ENCODE measurements at regions of chr12 and their contacts with region 1.

Region 1: DNA sequence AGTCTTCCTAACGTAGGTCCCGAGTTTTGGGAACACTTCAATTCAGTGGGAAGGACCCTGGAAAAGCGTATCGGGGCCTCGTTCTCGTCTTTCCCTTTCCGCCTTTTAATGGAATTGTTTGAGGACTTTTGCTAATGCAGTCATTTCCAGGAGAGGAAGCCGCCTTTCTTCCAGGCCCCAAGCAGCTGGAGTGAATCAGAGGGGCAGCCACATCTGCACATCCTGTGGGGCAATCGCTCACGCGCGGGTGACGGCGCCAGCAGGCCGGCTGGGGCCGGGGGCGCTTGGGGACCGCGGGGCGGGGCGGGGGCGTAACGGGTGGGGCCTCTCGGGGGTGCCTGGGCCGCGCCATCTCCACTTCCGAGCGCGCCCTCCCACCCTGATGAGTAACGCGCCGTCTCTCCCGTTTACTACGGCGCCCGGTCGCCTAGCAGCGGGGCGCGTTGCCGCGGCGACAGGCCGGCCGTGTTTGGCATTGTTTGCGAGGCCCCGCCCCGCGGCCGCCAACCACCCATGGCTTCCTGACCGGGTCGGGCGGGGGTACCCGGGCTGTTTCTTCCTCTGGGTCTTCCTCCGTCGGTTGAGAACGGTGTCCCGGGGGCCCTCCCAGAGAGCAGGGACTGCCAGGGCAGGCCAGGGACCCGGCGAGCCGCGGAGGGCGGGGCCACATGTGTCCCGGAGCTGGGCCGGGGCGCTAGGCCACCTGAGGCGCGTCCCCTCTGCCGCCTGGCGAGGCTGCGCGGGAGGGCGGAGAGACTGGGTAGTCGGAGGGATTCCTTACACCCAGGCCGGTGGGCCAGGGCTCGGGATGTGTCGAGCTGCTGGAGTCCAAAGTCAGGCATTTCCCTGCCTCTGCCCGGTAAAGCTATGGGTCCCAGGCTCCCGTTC is 2.3 kb downstream of the GSG1 start:
- DNase-seq: peak; percentile 93
- H3K4me3 Mint-ChIP-seq: peak overlapping the region; percentile 61
- H3K27ac Mint-ChIP-seq: peak overlapping the region; percentile 83
- H3K4me1 Mint-ChIP-seq: peaks cover 57% of the 10 kb centered on the region
- H3K27me3 Mint-ChIP-seq: no peaks in the 10 kb centered on the region

Region 2: DNA sequence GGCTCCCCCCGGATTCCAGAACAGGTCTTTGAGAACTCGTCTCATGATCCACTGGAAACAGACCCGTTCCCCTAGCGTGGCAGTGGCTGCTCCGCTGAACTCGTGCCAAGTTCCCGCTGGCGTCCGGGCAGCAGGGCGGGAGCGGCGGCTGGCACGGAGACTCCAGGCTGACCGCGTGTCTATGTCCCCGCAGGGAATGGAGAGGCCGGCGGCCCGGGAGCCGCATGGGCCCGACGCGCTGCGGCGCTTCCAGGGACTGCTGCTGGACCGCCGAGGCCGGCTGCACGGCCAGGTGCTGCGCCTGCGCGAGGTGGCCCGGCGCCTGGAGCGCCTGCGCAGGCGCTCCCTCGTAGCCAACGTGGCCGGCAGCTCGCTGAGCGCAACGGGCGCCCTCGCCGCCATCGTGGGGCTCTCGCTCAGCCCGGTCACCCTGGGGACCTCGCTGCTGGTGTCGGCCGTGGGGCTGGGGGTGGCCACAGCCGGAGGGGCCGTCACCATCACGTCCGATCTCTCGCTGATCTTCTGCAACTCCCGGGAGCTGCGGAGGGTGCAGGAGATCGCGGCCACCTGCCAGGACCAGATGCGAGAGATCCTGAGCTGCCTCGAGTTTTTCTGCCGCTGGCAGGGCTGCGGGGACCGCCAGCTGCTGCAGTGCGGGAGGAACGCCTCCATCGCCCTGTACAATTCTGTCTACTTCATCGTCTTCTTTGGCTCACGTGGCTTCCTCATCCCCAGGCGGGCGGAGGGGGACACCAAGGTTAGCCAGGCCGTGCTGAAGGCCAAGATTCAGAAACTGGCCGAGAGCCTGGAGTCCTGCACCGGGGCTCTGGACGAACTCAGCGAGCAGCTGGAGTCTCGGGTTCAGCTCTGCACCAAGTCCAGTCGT is 314.2 kb before region 1 on chr12:
- CTCF ChIA-PET with region 1: no interaction called
- POLR2A ChIA-PET with region 1: no interaction called
- intact Hi-C with region 1: loop called (anchors 5 kb)
- DNase-seq: peak; percentile 80
- H3K4me3 Mint-ChIP-seq: peak overlapping the region; percentile 83
- H3K27ac Mint-ChIP-seq: peak overlapping the region; percentile 80
- H3K4me1 Mint-ChIP-seq: peaks cover 36% of the 10 kb centered on the region
- H3K27me3 Mint-ChIP-seq: no peaks in the 10 kb centered on the region

Region 3: DNA sequence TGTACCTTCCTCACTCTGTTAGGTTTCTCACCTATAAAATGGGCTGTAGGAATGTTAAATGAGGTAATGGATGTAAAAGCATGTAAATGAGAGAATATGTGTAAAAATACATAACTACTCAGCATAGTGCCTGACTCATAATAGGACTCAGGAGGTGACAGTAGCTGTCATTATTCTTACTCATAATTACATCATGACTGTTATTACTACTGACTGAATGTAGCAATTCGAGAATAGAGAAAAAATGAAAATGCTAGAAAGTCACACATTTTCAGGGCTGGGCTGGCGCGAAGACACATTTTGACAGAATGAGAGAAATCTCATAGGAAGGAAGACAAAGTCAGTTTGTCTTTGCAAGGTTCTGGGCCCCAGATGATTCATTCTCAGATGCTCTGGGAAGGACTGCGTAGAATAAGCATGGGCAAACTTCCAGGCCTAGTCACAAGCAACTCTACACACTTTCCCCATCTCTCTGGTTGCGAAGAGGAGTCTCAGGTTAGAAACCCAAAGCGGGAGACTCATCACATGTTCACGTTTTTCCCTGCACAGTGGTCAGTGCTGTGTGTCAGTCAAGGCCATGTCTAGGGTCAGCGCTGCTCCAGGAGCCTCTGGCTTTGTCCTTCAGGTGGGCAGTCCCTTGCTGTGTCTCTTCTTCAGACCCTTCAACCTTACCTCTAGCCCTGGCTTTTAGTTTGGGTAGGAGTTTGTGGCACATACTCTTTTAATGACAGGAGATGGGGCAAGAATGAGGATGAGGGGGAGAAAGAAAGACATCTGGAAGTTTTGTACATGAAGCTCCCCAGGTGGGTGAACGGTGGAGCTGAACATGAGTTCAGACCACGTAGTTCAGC is 201.4 kb before region 1 on chr12:
- CTCF ChIA-PET with region 1: no interaction called
- POLR2A ChIA-PET with region 1: no interaction called
- intact Hi-C with region 1: loop called (anchors 1 kb)
- DNase-seq: peak; percentile 86
- H3K4me3 Mint-ChIP-seq: no peak overlapping the region
- H3K27ac Mint-ChIP-seq: peak overlapping the region; percentile 77
- H3K4me1 Mint-ChIP-seq: peaks cover 19% of the 10 kb centered on the region
- H3K27me3 Mint-ChIP-seq: peaks cover 16% of the 10 kb centered on the region

Region 4: GRCh38 chr12:13165617-13166041 is 64.5 kb after region 1 on chr12:
- CTCF ChIA-PET with region 1: interaction called, 4 read pairs
- POLR2A ChIA-PET with region 1: no interaction called
- intact Hi-C with region 1: loop called (anchors 1 kb)
- DNase-seq: peak; percentile 92
- H3K4me3 Mint-ChIP-seq: no peak overlapping the region
- H3K27ac Mint-ChIP-seq: peak overlapping the region; percentile 52
- H3K4me1 Mint-ChIP-seq: peaks cover 25% of the 10 kb centered on the region
- H3K27me3 Mint-ChIP-seq: peaks cover 5% of the 10 kb centered on the region

Region 5: GRCh38 chr12:13205809-13206559 is 104.9 kb after region 1 on chr12:
- CTCF ChIA-PET with region 1: interaction called, 173 read pairs
- POLR2A ChIA-PET with region 1: interaction called, 27 read pairs
- intact Hi-C with region 1: loop called (anchors 1 kb)
- DNase-seq: peak; percentile 71
- H3K4me3 Mint-ChIP-seq: no peak overlapping the region
- H3K27ac Mint-ChIP-seq: peak overlapping the region; percentile 50
- H3K4me1 Mint-ChIP-seq: peaks cover 60% of the 10 kb centered on the region
- H3K27me3 Mint-ChIP-seq: no peaks in the 10 kb centered on the region